CD8-positive, alpha-beta T cell (primary cell): ENCODE measurements at regions of chr17 and their contacts with region 1.

Region 1: DNA sequence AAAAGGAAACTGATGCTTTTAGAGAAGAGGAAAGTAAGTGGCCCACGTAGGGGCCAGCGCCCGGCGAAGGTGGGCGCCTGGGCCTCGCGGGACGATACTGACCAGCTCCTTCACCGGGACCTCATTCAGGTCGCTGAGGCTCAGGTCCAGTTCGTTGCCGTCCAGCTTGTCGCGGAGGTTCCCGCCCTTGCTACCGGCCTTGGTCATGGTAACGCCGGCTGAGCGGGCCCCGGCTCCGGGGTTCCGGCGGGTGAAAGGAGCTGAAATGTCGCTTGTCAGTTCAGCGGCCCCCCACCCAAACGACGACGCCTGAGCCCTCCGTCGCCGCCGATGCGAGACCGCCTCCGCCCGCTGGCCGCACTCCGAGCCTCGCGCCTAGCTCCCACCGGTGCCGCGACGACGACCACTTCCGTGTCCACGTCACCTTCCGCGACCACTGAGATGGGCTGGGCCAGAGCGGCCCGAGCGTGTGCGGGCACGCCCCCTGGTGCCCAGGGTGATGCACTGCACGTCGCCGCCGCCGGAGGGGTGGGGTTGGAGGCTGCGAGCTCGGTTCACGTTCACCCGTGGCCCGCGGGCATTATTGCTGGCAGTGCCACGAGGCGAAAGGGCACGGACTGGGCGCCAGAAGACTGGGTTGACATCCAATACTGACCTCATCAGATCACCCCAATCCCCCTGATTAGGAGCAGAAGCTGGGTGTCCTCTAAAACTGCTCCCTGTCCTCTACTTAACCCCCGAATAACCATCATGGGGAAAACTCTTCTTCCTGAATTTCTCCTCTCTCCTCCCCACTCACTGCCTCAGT is at the start of gene LRRC59:
- DNase-seq: peak; percentile 90 to 97 (median 94)
- ATAC-seq: peak; percentile 100
- H3K4me3 ChIP-seq: peak within 1 kb of the TSS; percentile 78 to 94
- H3K4me3 Mint-ChIP-seq: peak within 1 kb of the TSS; percentile 89
- H3K27ac ChIP-seq: peak within 1 kb of the TSS; percentile 85 to 87
- H3K27ac Mint-ChIP-seq: peak within 1 kb of the TSS; percentile 91
- H3K4me1 ChIP-seq: peaks cover 22% of the 10 kb centered on the region
- H3K4me1 Mint-ChIP-seq: peaks cover 40% of the 10 kb centered on the region
- H3K27me3 ChIP-seq: no peaks in the 10 kb centered on the region
- H3K27me3 Mint-ChIP-seq: no peaks in the 10 kb centered on the region
- CTCF ChIP-seq: peak; percentile 90
- total RNA-seq, gene LRRC59: 59.1 to 59.9 TPM

Region 2: GRCh38 chr17:50037321-50038071 is 359.8 kb before region 1 on chr17:
- CTCF ChIA-PET with region 1: no interaction called
- POLR2A ChIA-PET with region 1: no interaction called
- intact Hi-C with region 1: no loop called
- DNase-seq: no peak
- ATAC-seq: no peak
- H3K4me3 ChIP-seq: no peak overlapping the region
- H3K4me3 Mint-ChIP-seq: no peak overlapping the region
- H3K27ac ChIP-seq: no peak overlapping the region
- H3K27ac Mint-ChIP-seq: no peak overlapping the region
- H3K4me1 ChIP-seq: no peaks in the 10 kb centered on the region
- H3K4me1 Mint-ChIP-seq: no peaks in the 10 kb centered on the region
- H3K27me3 ChIP-seq: no peaks in the 10 kb centered on the region
- H3K27me3 Mint-ChIP-seq: peaks cover 9% of the 10 kb centered on the region
- CTCF ChIP-seq: no peak

Region 3: GRCh38 chr17:50345432-50346312 is 51.6 kb before region 1 on chr17 and contains the start of gene XYLT2:
- CTCF ChIA-PET with region 1: interaction called, 3 read pairs
- POLR2A ChIA-PET with region 1: interaction called, 17 read pairs
- intact Hi-C with region 1: no loop called
- DNase-seq: peak; percentile 83 to 96 (median 93)
- ATAC-seq: peak; percentile 94
- H3K4me3 ChIP-seq: peak within 1 kb of the TSS; percentile 78 to 90
- H3K4me3 Mint-ChIP-seq: peak within 1 kb of the TSS; percentile 93
- H3K27ac ChIP-seq: peak within 1 kb of the TSS; percentile 56 to 77
- H3K27ac Mint-ChIP-seq: peak within 1 kb of the TSS; percentile 91
- H3K4me1 ChIP-seq: peaks cover 29% of the 10 kb centered on the region
- H3K4me1 Mint-ChIP-seq: peaks cover 37% of the 10 kb centered on the region
- H3K27me3 ChIP-seq: no peaks in the 10 kb centered on the region
- H3K27me3 Mint-ChIP-seq: no peaks in the 10 kb centered on the region
- CTCF ChIP-seq: no peak
- total RNA-seq, gene XYLT2: 9.0 to 9.4 TPM

Region 4: DNA sequence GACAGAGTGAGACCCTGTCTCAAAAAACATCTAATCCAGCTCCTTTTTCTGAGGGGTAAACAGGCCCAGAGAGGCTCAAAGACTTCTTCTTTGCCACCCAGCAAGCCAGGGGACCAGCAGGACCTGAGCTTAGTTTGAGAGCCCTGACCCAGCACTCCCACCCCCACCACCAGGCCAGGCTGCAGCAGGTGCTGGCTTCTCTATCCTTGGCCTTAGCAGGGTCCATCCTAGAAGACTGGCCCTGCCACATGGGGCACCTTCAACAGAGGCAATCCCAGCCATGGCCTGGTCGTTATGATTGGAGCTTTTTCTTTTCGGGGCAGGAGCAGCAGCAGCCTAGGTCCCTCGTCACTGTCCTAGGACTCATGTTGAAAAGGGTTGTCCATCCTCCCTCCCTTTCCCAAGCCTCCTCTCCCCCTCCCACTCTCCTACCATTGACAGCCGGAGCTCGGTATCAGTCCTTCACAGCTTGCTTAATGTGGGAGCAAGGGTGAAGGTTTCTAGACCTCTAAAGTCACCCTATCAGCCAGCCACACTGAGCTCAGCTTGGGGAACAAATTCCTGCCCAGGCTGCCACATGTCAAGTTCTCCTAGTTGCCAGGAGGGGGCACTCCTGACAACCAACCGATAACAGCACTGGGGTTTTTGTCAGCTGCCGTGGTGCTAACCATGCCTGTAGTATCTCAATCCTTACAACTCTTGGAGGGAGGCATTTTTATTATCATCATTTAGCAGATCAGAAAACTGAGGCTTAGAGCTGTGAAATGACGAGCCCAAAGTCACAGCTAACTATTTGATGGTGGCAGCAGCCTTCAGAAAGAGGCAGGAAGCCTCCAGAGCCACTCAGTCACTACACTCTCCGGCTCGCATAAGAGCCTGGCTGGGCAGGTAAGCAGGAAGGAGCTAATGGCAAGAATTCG is 35.5 kb before region 1 on chr17:
- CTCF ChIA-PET with region 1: interaction called, 52 read pairs
- POLR2A ChIA-PET with region 1: interaction called, 9 read pairs
- intact Hi-C with region 1: loop called (anchors 1 to 5 kb)
- DNase-seq: peak in 8 of 9 experiments; percentile 32 to 83 (median 59)
- ATAC-seq: peak; percentile 94
- H3K4me3 ChIP-seq: no peak overlapping the region
- H3K4me3 Mint-ChIP-seq: peak overlapping the region; percentile 49
- H3K27ac ChIP-seq: peak overlapping the region in 1 of 2 experiments; percentile 32
- H3K27ac Mint-ChIP-seq: peak overlapping the region; percentile 70
- H3K4me1 ChIP-seq: peaks cover 6% of the 10 kb centered on the region
- H3K4me1 Mint-ChIP-seq: peaks cover 22% of the 10 kb centered on the region
- H3K27me3 ChIP-seq: no peaks in the 10 kb centered on the region
- H3K27me3 Mint-ChIP-seq: no peaks in the 10 kb centered on the region
- CTCF ChIP-seq: peak; percentile 79

Region 5: DNA sequence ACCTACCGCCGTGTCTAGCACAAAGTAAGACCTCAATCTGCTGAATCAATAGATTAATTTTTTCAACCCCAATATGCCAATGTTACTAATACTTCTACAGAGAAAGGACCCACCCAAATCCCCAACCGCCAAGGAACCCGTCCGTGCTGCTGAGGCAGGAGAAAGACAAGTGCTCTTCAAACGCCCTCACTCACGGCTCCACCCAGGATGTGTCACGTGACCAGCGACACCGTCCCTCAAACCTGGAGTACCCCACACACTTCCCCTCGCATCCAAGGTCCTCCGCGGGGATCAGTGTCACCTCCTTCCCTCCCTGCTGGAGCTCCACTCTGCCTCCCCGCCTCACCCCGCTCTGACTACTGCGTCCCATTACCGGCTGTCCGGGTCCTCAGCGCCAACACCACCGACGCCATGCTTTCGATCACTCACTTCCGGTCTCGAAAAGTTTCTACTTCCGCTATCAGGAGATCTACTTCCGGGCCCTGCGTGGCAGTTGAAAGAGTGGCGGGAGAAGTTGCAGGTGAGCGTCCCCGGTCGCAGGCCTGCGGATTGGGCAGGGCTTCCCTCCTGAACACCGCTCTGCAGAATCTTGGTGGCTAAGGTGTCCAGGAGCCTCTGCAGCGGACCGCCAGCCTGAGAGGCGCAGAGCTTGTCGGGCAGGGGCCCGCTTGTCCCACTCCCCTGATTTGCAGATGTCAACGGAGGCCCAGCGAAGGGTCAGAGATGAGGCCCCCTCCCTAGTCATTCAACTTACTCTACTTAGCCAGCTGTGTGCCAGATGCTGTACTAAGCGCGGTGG is 24.4 kb before region 1 on chr17 and contains the starts of genes EME1 and MRPL27:
- CTCF ChIA-PET with region 1: interaction called, 16 read pairs
- POLR2A ChIA-PET with region 1: interaction called, 15 read pairs
- intact Hi-C with region 1: loop called (anchors 1 kb)
- DNase-seq: peak; percentile 73 to 93 (median 87)
- ATAC-seq: peak; percentile 91
- H3K4me3 ChIP-seq: peak within 1 kb of the TSS; percentile 93 to 98
- H3K4me3 Mint-ChIP-seq: peak within 1 kb of the TSS; percentile 97
- H3K27ac ChIP-seq: peak within 1 kb of the TSS; percentile 98 to 99
- H3K27ac Mint-ChIP-seq: peak within 1 kb of the TSS; percentile 99
- H3K4me1 ChIP-seq: peaks cover 20% of the 10 kb centered on the region
- H3K4me1 Mint-ChIP-seq: peaks cover 28% of the 10 kb centered on the region
- H3K27me3 ChIP-seq: no peaks in the 10 kb centered on the region
- H3K27me3 Mint-ChIP-seq: no peaks in the 10 kb centered on the region
- CTCF ChIP-seq: no peak
- total RNA-seq, gene EME1: 0.53 to 0.60 TPM
- total RNA-seq, gene MRPL27: 28.6 to 30.8 TPM

Region 6: GRCh38 chr17:50380369-50381259 is 16.7 kb before region 1 on chr17:
- CTCF ChIA-PET with region 1: interaction called, 10 read pairs
- POLR2A ChIA-PET with region 1: interaction called, 3 read pairs
- intact Hi-C with region 1: no loop called
- DNase-seq: no peak
- ATAC-seq: peak; percentile 23
- H3K4me3 ChIP-seq: no peak overlapping the region
- H3K4me3 Mint-ChIP-seq: no peak overlapping the region
- H3K27ac ChIP-seq: no peak overlapping the region
- H3K27ac Mint-ChIP-seq: no peak overlapping the region
- H3K4me1 ChIP-seq: no peaks in the 10 kb centered on the region
- H3K4me1 Mint-ChIP-seq: no peaks in the 10 kb centered on the region
- H3K27me3 ChIP-seq: no peaks in the 10 kb centered on the region
- H3K27me3 Mint-ChIP-seq: no peaks in the 10 kb centered on the region
- CTCF ChIP-seq: no peak

Region 7: DNA sequence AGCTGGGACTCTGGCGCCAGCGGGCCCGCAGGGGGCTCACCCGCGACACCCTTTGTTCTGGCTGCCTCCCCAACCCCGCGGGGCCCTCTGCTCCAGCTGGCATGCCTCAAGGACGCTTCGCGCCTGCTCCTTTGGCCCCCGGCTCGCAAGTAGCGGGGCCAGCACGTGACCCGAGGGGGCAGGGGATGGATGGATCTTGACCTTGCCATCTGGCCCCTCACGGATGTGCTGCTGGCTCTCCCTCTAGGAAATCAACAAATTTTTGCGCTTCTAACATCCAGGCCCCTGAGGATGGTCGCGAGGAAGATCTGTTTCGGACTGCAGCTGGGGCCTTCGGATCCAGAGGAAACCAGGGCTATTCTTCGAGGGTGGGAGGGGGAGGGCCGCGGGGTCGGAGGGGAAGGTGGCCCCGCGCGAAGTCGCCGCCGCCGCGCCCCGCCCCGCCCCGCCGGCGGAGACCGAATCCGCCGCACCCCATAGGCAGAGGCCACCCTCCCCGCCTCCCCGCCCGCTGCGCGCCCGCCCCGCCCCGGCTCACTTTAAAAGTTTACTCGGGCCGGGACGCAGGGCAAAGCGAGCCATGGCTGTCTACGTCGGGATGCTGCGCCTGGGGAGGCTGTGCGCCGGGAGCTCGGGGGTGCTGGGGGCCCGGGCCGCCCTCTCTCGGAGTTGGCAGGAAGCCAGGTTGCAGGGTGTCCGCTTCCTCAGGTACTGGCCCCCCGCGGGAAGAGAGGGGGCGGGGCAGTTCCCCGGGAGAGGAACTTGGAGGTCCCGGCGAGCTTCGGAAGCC is 28.6 kb after region 1 on chr17 and contains the start of gene ACSF2:
- CTCF ChIA-PET with region 1: interaction called, 6 read pairs
- POLR2A ChIA-PET with region 1: interaction called, 17 read pairs
- intact Hi-C with region 1: loop called (anchors 1 to 2 kb)
- DNase-seq: peak; percentile 39 to 79 (median 67)
- ATAC-seq: peak; percentile 85
- H3K4me3 ChIP-seq: peak within 1 kb of the TSS; percentile 76 to 77
- H3K4me3 Mint-ChIP-seq: peak within 1 kb of the TSS; percentile 87
- H3K27ac ChIP-seq: peak within 1 kb of the TSS; percentile 21 to 75
- H3K27ac Mint-ChIP-seq: peak within 1 kb of the TSS; percentile 79
- H3K4me1 ChIP-seq: peaks cover 28% of the 10 kb centered on the region
- H3K4me1 Mint-ChIP-seq: peaks cover 35% of the 10 kb centered on the region
- H3K27me3 ChIP-seq: no peaks in the 10 kb centered on the region
- H3K27me3 Mint-ChIP-seq: no peaks in the 10 kb centered on the region
- CTCF ChIP-seq: no peak
- total RNA-seq, gene ACSF2: 12.5 to 12.9 TPM

Region 8: DNA sequence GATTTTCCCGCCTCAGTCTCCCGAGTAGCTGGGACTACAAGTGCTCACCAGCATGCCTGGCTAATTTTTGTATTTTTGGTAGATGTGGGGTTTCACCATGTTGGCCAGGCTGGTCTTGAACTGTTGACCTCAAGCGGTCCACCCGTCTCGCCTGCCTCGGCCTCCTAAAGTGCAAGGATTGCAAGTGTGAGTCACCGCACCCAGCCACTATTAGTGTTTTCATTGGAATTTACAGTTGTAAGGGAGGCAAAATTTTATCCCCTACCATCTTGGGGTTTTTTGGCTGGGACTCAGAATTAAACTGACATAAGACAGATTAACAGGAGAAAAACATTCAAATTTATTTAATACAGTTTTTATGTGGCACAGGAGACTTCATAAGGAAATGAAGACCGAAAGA is 98.6 kb after region 1 on chr17:
- CTCF ChIA-PET with region 1: no interaction called
- POLR2A ChIA-PET with region 1: no interaction called
- intact Hi-C with region 1: no loop called
- DNase-seq: no peak
- ATAC-seq: no peak
- H3K4me3 ChIP-seq: no peak overlapping the region
- H3K4me3 Mint-ChIP-seq: no peak overlapping the region
- H3K27ac ChIP-seq: no peak overlapping the region
- H3K27ac Mint-ChIP-seq: no peak overlapping the region
- H3K4me1 ChIP-seq: no peaks in the 10 kb centered on the region
- H3K4me1 Mint-ChIP-seq: no peaks in the 10 kb centered on the region
- H3K27me3 ChIP-seq: no peaks in the 10 kb centered on the region
- H3K27me3 Mint-ChIP-seq: no peaks in the 10 kb centered on the region
- CTCF ChIP-seq: no peak

Region 9: DNA sequence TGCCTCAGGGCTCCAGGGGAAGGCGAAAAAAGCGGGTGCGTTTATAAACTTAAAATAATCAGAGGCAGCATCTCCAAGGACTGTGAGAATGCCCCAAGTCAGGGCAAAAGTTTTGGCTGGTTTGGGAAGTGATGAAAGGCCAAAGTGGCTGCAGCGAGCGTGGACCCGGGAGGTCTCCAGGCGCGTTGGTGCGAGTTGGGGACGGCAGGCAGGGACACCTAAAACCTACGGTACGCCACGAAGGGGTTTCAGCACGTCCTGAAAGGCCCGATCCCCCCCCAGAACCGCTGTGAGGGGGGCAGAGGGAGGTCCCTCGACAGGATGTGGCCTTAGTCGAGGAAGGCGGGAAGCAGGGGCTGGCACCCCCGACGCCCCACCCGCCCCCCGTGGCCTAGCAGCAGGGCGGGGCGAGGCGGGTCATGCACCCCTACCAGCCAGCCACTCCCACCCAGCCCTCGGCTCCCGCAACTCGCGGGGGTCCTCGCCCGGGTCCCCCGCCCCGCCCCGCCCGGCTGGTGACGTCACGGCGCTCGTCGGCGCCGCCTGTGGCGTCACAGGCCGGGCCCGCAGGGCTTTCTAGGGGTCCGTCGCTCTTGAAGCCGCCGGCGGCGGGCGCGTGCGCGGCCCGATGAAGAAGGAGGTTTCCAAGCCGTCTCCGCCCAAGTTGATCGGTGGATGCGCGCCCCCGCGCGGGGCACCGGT is 110.7 kb after region 1 on chr17 and contains the start of gene MYCBPAP:
- CTCF ChIA-PET with region 1: interaction called, 3 read pairs
- POLR2A ChIA-PET with region 1: no interaction called
- intact Hi-C with region 1: loop called in 1 of 2 experiments (anchors 1 kb)
- DNase-seq: peak; percentile 68 to 91 (median 76)
- ATAC-seq: peak; percentile 73
- H3K4me3 ChIP-seq: peak within 1 kb of the TSS; percentile 68 to 77
- H3K4me3 Mint-ChIP-seq: peak within 1 kb of the TSS; percentile 95
- H3K27ac ChIP-seq: peak within 1 kb of the TSS; percentile 50 to 56
- H3K27ac Mint-ChIP-seq: peak within 1 kb of the TSS; percentile 94
- H3K4me1 ChIP-seq: peaks cover 22% of the 10 kb centered on the region
- H3K4me1 Mint-ChIP-seq: peaks cover 43% of the 10 kb centered on the region
- H3K27me3 ChIP-seq: no peaks in the 10 kb centered on the region
- H3K27me3 Mint-ChIP-seq: no peaks in the 10 kb centered on the region
- CTCF ChIP-seq: no peak
- total RNA-seq, gene MYCBPAP: 3.4 to 3.5 TPM